ENCODE measurements at regions of chr6 and their contacts with region 1.

Region 1: GRCh38 chr6:12233693-12234571 is 56.2 kb upstream of the EDN1 start:
- DNase-seq: peak; percentile 82
- H3K4me3 Mint-ChIP-seq: peak overlapping the region; percentile 22
- H3K27ac Mint-ChIP-seq: peak overlapping the region; percentile 64
- H3K4me1 Mint-ChIP-seq: peaks cover 42% of the 10 kb centered on the region
- H3K27me3 Mint-ChIP-seq: peaks cover 1% of the 10 kb centered on the region

Region 2: DNA sequence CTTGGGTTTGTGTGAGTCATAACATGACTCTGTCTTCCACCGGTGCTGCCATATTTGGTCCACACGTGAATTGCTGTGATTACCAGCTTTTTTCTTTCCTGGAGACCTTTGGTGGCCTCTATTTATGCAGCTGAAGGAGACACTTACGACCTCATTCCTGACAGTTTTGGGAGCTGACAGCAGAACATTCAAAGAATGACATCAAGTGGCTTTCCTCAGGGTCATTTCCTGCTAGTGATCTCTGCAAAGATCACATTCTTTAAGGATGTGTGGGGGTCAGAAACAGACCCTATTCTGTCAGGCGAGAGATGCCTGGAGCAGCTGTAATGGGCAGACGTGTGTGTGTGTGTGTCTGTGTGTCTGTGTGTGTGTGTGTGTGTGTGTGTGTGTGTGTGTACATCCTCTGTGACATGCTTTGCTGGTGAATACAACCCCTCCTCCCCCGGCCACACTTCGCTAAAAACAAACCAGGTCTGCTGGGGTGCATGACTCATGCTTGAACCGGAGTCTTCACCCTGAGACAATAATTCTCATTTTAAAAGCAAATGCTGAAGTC is 580.8 kb before region 1 on chr6:
- intact Hi-C with region 1: loop called (anchors 1 kb)
- DNase-seq: peak; percentile 85
- H3K4me3 Mint-ChIP-seq: peak overlapping the region; percentile 3
- H3K27ac Mint-ChIP-seq: peak overlapping the region; percentile 52
- H3K4me1 Mint-ChIP-seq: peaks cover 13% of the 10 kb centered on the region
- H3K27me3 Mint-ChIP-seq: peaks cover 6% of the 10 kb centered on the region

Region 3: DNA sequence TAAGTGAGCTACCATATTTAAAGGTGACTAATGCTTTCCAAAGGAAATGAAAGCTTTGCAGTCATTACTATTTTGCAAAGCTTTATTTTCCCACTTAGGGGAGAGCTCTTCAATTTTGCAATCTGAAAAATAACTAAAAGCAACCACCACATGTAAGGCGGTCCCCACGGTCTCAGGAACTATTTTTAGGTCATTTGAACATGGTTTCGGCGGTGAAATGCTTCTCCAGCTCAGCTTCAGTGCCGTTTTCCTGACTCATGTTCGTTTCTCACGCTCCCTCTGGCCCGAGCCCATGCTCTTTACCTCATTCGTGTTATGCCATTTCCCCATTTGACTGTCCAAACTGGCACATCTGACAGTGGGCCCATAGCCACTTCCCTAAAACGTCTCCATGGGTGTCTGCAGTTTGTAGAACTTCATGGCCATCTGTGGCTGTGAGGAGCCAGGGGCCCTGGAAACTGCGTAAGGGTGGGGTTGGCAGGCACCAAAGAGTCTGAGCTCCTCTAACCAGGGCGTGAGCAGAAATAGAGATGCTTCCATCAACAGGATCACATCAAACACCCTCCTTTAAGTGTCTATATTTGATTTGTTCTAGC is 501.8 kb before region 1 on chr6:
- intact Hi-C with region 1: loop called (anchors 1 kb)
- DNase-seq: peak; percentile 76
- H3K4me3 Mint-ChIP-seq: peak overlapping the region; percentile 64
- H3K27ac Mint-ChIP-seq: peak overlapping the region; percentile 93
- H3K4me1 Mint-ChIP-seq: peaks cover 61% of the 10 kb centered on the region
- H3K27me3 Mint-ChIP-seq: no peaks in the 10 kb centered on the region

Region 4: DNA sequence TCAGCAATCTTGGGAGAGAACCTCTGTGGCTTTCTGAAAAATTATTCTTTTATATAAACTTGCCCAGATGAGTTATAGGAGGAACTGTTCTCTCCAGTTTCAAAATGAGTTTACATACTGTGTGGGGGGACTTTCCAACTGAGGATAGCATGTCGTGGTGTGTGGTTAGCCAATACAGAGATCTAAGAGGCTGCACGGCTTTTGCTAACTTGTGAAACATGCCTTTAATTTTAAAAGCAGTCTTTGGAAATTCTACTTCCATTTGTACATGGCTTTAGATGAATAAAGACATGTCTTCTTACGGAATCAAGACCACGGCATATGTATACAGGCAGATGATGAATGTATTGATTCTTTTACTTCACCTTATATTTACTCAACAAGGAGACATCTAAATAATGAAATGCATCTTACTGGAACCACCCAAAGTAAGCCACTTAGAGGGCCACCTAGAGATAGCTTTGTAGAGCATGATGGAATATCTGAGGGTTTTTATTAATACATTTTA is 182.0 kb before region 1 on chr6:
- intact Hi-C with region 1: loop called (anchors 1 kb)
- DNase-seq: peak; percentile 93
- H3K4me3 Mint-ChIP-seq: peak overlapping the region; percentile 84
- H3K27ac Mint-ChIP-seq: peak overlapping the region; percentile 93
- H3K4me1 Mint-ChIP-seq: peaks cover 63% of the 10 kb centered on the region
- H3K27me3 Mint-ChIP-seq: no peaks in the 10 kb centered on the region

Region 5: DNA sequence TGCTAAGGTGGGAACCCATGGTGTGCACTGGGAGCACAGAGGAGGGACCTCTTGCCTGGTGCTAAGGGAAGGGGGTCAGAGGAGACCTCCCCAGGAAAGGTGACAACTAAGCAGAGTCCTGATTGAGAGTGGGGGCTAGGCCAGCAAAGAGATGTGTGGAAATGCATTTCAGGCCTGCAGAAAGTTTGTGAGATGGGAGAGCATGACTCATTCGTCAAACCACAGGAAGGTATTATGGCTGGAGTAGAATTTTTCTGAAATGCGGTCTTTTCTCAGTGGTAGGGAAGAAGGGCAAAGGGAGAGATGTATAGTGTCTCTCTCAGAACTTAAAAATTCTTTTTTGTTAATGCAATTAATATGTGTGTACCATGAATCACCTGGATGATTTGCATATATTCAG is 32.6 kb after region 1 on chr6:
- intact Hi-C with region 1: loop called (anchors 5 kb)
- DNase-seq: no peak
- H3K4me3 Mint-ChIP-seq: no peak overlapping the region
- H3K27ac Mint-ChIP-seq: no peak overlapping the region
- H3K4me1 Mint-ChIP-seq: peaks cover 19% of the 10 kb centered on the region
- H3K27me3 Mint-ChIP-seq: peaks cover 6% of the 10 kb centered on the region

Region 6: GRCh38 chr6:12280458-12280857 is 46.5 kb after region 1 on chr6:
- intact Hi-C with region 1: loop called (anchors 5 kb)
- DNase-seq: no peak
- H3K4me3 Mint-ChIP-seq: no peak overlapping the region
- H3K27ac Mint-ChIP-seq: no peak overlapping the region
- H3K4me1 Mint-ChIP-seq: peaks cover 12% of the 10 kb centered on the region
- H3K27me3 Mint-ChIP-seq: peaks cover 18% of the 10 kb centered on the region

Region 7: DNA sequence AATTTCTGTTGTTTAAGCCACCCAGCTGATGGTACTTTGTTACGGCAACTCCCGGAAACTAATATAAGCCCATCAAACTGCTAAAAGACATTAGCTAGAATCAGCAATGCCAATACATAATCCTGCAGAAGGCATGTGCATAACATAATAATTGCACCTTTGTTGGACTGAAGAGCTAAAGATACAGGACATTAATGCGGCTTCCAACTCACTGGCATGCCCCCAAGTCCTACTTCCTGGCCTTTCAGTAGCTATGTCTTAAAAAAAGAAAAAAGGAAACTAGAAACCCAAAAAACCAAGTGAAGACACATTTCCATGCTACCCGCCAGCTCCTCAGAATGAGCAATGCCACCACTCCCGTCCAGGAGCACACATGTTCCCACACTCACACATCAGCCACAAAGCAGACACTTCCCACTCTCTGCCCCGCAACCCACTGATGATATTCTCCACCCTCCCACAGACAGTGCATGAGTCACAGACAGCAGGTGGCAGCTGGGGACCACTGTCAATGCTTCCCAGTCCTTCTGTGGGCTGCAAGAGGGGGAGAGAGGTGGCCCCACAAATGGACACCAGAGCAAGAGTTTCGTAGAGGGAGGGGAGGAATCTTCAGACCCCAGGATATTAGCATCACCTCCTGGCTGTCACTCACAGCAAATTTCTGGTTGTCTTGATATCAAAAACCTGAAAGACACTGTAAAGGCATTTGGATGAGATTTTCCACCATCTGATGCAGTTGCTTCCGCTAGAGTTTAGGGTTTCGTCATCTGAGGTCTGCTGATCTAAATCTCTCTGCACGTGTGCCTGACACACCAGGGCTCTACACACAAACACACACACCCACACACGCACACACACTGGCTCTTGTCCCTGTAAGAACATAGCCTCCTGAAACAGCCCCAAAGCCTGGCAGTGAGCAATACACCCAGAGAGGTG is 1220.6 kb after region 1 on chr6:
- intact Hi-C with region 1: loop called (anchors 10 kb)
- DNase-seq: peak; percentile 85
- H3K4me3 Mint-ChIP-seq: peak overlapping the region; percentile 42
- H3K27ac Mint-ChIP-seq: peak overlapping the region; percentile 93
- H3K4me1 Mint-ChIP-seq: peaks cover 43% of the 10 kb centered on the region
- H3K27me3 Mint-ChIP-seq: no peaks in the 10 kb centered on the region

Measured in activated CD4-positive, alpha-beta T cell treated with anti-CD3 and anti-CD28 coated beads, Interleukin-2, amount 10 ng/mL, durations not matched to agents 24 days and 14 days (primary cell).